ENCODE measurements at regions of chr16 and their contacts with region 1.

Region 1: DNA sequence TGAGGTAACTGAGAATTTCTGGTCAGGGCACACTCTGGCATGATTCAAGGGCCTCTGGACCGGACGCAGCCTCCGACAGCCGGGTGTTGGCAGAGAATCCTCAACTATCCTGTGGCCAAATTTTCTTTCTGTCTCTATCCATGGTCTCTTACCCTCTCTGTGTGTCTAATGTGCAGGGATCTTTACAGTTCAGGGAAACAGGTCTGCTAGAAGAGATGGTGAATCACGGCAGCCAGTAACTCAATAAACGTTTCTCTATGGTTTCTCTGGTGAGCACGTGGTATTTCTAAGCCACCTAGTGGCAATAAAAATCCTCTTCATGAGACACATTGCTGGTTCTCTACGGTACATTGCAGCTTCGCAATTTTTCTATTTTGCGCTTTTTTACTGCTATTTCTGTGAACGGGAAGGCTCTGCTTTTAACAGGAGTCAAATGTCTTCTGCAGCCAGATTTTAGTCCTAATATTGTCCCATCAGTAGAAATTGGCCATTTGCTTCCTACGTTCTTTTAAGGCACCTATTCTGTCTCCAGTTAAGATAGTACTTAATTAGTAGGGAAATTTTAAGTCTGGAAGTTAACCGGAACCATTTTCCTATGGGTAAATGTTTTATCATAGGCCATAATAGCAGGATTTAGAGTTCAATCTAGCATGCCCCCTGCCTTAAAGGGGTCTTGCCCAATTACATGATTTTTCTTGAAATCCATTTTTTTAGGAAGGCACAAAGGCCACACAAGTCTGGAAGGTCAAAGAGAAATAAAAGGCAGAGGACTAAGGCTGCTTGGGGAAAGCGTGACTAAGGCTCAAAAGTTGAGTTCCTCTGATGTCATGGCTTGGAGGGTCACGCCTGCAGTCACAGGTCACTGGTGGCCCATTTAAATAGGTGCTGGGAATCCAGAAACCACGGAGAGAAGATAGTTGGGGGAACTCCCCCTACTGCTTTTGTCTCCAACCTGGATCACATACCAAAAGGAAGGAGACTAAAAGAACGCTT is 31.5 kb downstream of the QPRT start:
- DNase-seq: peak in 7 of 9 donors; percentile 53 to 77 (median 66)
- ATAC-seq: peak; percentile 96
- H3K4me3 ChIP-seq: no peak overlapping the region
- H3K4me3 Mint-ChIP-seq: peak overlapping the region in 2 of 10 donors; percentile 2 to 16
- H3K27ac ChIP-seq: no peak overlapping the region
- H3K27ac Mint-ChIP-seq: peak overlapping the region in 8 of 9 donors; percentile 43 to 89 (median 60)
- H3K4me1 ChIP-seq: peaks cover 6% of the 10 kb centered on the region in 2 donors
- H3K4me1 Mint-ChIP-seq: peaks cover 8 to 15% (median 12%) of the 10 kb centered on the region in 7 donors
- H3K27me3 ChIP-seq: no peaks in the 10 kb centered on the region
- H3K27me3 Mint-ChIP-seq: peaks cover 0 to 18% (median 0%) of the 10 kb centered on the region in 5 donors

Region 2: GRCh38 chr16:29720699-29721098 is 10.2 kb after region 1 on chr16:
- CTCF ChIA-PET with region 1: interaction called, 5 read pairs
- POLR2A ChIA-PET with region 1: interaction called, 3 read pairs
- intact Hi-C with region 1: loop called in 1 of 2 experiments (anchors 1 kb)
- DNase-seq: no peak
- ATAC-seq: no peak
- H3K4me3 ChIP-seq: no peak overlapping the region
- H3K4me3 Mint-ChIP-seq: peak overlapping the region in 1 of 10 donors; percentile 49
- H3K27ac ChIP-seq: no peak overlapping the region
- H3K27ac Mint-ChIP-seq: no peak overlapping the region
- H3K4me1 ChIP-seq: no peaks in the 10 kb centered on the region
- H3K4me1 Mint-ChIP-seq: peaks cover 11 to 24% (median 20%) of the 10 kb centered on the region in 7 donors
- H3K27me3 ChIP-seq: no peaks in the 10 kb centered on the region
- H3K27me3 Mint-ChIP-seq: peaks cover 0 to 6% (median 0%) of the 10 kb centered on the region in 5 donors

Region 3: DNA sequence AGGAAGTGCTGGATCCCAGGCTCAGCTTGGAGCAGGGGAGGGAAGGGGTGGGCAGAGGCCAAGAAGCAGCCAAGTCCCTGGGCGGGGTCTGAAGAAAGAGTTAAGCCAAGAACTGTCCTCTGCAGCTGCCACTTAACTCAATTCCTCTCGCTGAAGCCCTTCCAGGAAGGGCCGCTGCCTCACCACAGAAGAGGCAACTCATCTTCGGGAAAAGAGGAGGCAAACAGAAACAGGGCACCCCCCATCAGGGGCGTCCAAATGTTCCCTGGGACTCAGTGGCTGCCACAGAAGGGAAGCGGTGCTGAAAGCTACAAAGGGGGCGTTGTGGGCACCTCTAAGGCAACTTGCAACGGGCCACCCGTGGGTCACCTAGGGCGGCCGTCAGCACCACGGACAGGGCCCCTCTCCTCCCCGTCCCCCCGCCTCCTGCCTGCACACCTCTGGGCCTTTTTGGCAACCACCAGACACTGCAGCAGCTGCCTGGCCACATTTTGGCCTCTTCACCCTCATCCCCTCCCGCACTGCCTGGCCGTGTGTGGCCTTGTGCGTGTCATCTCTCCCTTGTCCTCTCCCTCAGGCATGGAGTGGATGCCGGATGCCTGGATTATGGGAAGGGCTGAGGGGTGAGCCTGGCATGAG is 318.0 kb after region 1 on chr16:
- CTCF ChIA-PET with region 1: no interaction called
- POLR2A ChIA-PET with region 1: no interaction called
- intact Hi-C with region 1: no loop called
- DNase-seq: no peak
- ATAC-seq: no peak
- H3K4me3 ChIP-seq: no peak overlapping the region
- H3K4me3 Mint-ChIP-seq: no peak overlapping the region
- H3K27ac ChIP-seq: no peak overlapping the region
- H3K27ac Mint-ChIP-seq: no peak overlapping the region
- H3K4me1 ChIP-seq: no peaks in the 10 kb centered on the region
- H3K4me1 Mint-ChIP-seq: peaks cover 4 to 15% (median 9%) of the 10 kb centered on the region in 7 donors
- H3K27me3 ChIP-seq: peaks cover 11 to 13% of the 10 kb centered on the region in 2 donors
- H3K27me3 Mint-ChIP-seq: peaks cover 38 to 55% (median 43%) of the 10 kb centered on the region in 5 donors

Measured in naive thymus-derived CD4-positive, alpha-beta T cell (primary cell).